HepG2 (cell line): ENCODE measurements at regions of chr12 and their contacts with region 1.

Region 1: GRCh38 chr12:56189176-56189917 is at the start of gene SMARCC2:
- DNase-seq: peak; percentile 73
- ATAC-seq: peak; percentile 86
- H3K4me3 ChIP-seq: peak within 1 kb of the TSS; percentile 76 to 94 (median 93)
- H3K27ac ChIP-seq: peak within 1 kb of the TSS; percentile 74
- H3K4me1 ChIP-seq: peaks cover 34% of the 10 kb centered on the region
- H3K27me3 ChIP-seq: no peaks in the 10 kb centered on the region; a peak in 1 of 5 replicates
- CTCF ChIP-seq: peak; percentile 81
- EP300 ChIP-seq: no peak
- POLR2A ChIP-seq: peak; percentile 29 to 46; a peak in 2 of 4 replicates
- RAD21 ChIP-seq: peak; percentile 62
- total RNA-seq, gene SMARCC2: 13.1 and 21.3 TPM in 2 replicates

Region 2: GRCh38 chr12:55885113-55885512 is 304.2 kb before region 1 on chr12:
- CTCF ChIA-PET with region 1: no interaction called
- POLR2A ChIA-PET with region 1: no interaction called
- in situ Hi-C with region 1: no loop called
- intact Hi-C with region 1: no loop called
- DNase-seq: no peak
- ATAC-seq: no peak
- H3K4me3 ChIP-seq: no peak overlapping the region
- H3K27ac ChIP-seq: no peak overlapping the region
- H3K4me1 ChIP-seq: peaks cover 11% of the 10 kb centered on the region
- H3K27me3 ChIP-seq: no peaks in the 10 kb centered on the region
- CTCF ChIP-seq: no peak
- EP300 ChIP-seq: no peak
- POLR2A ChIP-seq: no peak
- RAD21 ChIP-seq: no peak

Region 3: DNA sequence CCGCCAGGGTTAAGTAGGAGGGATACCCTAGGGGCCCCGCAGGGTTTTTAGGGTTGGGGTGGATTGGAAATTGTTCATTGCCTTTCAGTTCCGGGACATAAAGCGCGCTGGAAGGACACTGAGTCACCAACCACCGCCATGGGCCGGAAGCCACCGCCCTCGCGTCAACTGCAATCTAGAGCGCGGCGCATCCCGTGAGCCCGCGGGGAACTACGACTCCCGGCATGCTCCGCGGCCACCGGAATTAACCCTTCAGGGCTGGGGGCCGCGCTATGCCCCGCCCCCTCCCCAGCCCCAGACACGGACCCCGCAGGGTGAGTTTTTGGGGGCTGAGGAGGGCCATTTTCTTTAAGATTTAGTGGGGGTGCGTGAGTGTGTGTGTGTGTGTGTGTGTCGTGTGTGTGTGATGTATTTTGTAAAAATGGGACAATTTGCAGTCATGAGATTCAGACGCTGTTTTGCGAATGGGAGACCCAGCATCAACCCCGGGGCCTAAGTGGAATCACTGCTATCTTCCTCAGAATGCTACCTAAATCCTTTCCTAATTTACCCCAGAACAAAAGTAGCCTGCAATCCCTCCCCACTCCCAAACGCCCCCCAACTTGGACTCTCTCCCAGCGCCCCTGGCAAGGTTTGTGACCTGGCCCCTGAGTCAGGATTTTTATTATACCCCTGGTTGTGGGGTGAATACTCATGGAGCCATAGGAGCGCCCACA is 36.9 kb before region 1 on chr12 and contains the start of gene MYL6B:
- CTCF ChIA-PET with region 1: interaction called, 3 read pairs
- POLR2A ChIA-PET with region 1: interaction called, 10 read pairs
- in situ Hi-C with region 1: no loop called
- intact Hi-C with region 1: loop called (anchors 5 kb)
- DNase-seq: peak; percentile 83
- ATAC-seq: peak; percentile 89
- H3K4me3 ChIP-seq: peak within 1 kb of the TSS; percentile 79 to 86 (median 82)
- H3K27ac ChIP-seq: peak within 1 kb of the TSS; percentile 89
- H3K4me1 ChIP-seq: peaks cover 41% of the 10 kb centered on the region
- H3K27me3 ChIP-seq: no peaks in the 10 kb centered on the region; a peak in 1 of 5 replicates
- CTCF ChIP-seq: peak; percentile 25; the same call in 1 of the 2 replicates
- EP300 ChIP-seq: peak; percentile 29 to 30; a peak in 2 of 4 replicates
- POLR2A ChIP-seq: peak; percentile 66 to 81; a peak in 2 of 4 replicates
- RAD21 ChIP-seq: no peak
- total RNA-seq, gene MYL6B: 75.7 and 76.5 TPM in 2 replicates

Region 4: DNA sequence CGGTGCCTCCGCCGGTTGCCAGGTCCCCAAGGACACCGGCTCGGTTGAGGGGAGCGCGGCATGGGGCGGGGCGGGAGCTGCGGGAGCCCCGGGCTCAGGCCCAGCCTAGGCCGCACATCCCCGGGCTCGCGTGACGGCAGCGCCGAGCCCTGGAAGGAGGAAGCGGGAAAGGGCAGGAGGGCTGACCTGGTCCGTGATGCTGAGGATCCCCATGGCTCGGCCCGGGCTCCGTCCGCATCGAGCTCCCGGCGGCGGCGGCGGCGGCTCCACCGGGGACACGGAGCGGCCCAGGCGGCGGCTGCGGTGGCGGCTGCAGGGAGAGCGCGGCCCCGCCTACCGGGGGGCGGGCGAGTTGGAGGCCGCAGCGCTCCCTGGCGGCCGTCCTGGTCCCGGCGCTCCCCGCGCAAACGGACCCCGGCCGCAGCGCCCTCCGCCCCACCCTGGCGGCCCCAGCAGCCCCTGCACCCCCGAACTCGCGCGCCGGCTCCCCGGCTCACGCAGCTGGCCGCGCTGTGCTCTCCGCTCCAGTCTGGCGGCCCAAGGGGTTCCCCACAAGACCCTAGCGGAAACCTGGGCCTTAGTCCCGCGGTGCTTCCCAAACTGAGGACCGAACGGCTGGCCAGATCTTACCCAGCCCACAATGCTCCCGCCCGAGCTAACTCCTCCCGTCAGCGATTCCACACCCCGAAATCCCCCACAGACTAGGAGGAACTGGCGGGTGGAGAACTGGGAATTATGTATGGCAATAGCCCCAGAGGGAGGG is 68.9 kb after region 1 on chr12 and contains the start of gene ANKRD52:
- CTCF ChIA-PET with region 1: interaction called, 6 read pairs
- POLR2A ChIA-PET with region 1: no interaction called
- in situ Hi-C with region 1: loop called (anchors 5 kb)
- intact Hi-C with region 1: loop called (anchors 1 kb)
- DNase-seq: peak; percentile 26
- ATAC-seq: peak; percentile 92
- H3K4me3 ChIP-seq: peak within 1 kb of the TSS; percentile 74 to 96 (median 88)
- H3K27ac ChIP-seq: peak within 1 kb of the TSS; percentile 45
- H3K4me1 ChIP-seq: peaks cover 28% of the 10 kb centered on the region
- H3K27me3 ChIP-seq: no peaks in the 10 kb centered on the region
- CTCF ChIP-seq: peak; percentile 61
- EP300 ChIP-seq: no peak
- POLR2A ChIP-seq: peak in 1 of 2 experiments; percentile 47; a peak in 2 of 4 replicates
- RAD21 ChIP-seq: peak; percentile 84
- total RNA-seq, gene ANKRD52: 7.8 and 22.0 TPM in 2 replicates

Region 5: GRCh38 chr12:56377310-56377988 is 188.1 kb after region 1 on chr12:
- CTCF ChIA-PET with region 1: no interaction called
- POLR2A ChIA-PET with region 1: no interaction called
- in situ Hi-C with region 1: no loop called
- intact Hi-C with region 1: no loop called
- DNase-seq: no peak
- ATAC-seq: peak; percentile 77
- H3K4me3 ChIP-seq: peak overlapping the region in 2 of 3 experiments; percentile 5 to 18; a peak in 2 of 6 replicates
- H3K27ac ChIP-seq: no peak overlapping the region
- H3K4me1 ChIP-seq: peaks cover 45% of the 10 kb centered on the region
- H3K27me3 ChIP-seq: peaks cover 0 to 7% of the 10 kb centered on the region in 2 experiments; a peak in 1 of 5 replicates
- CTCF ChIP-seq: peak; percentile 57
- EP300 ChIP-seq: no peak
- POLR2A ChIP-seq: no peak
- RAD21 ChIP-seq: 0 out of 2 replicates have a peak, but pooled peaks have one; percentile 30

Region 6: DNA sequence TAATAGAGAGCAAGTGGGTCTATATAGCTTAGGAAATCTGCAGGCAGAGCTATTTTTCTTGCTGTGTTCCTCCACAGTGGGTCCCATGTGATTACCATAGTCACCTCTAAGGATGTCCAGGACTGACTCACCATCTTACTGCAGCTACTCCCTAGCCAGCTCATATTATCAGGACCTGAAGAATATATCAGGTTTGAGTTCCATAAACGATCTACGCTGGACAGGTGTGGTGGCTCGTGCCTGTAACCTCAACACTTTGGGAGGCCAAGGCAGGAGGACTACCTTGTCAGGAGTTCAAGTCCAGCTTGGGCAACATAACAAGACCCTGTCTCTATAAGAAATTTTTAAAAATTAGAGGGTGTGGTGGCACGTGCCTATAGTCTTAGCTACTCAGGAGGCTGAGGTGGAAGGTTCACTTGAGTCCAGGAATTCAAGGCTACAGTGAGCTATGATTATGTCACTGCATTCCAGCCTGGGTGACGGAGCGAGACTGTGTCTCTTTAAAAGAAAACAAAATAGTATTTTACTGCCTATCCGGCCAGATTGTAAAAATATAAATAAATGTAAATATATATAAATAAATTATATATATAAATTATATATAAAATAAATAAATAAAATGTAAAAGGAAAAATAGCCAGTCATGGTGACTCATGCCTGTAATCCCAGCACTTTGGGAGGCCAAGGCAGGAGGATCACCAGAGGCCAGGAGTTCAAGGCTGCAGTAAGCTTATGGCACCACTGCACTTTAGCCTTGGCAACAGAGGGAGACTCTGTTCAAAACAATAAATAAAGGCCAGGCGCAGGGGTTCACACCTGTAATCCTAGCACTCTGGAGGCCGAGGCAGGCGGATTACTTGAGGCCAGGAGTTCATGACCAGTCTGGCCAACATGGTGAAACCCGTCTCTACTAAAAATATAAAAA is 272.1 kb after region 1 on chr12:
- CTCF ChIA-PET with region 1: no interaction called
- POLR2A ChIA-PET with region 1: no interaction called
- in situ Hi-C with region 1: loop called (anchors 10 kb)
- intact Hi-C with region 1: loop called (anchors 5 kb)
- DNase-seq: peak; percentile 67
- ATAC-seq: no peak
- H3K4me3 ChIP-seq: no peak overlapping the region
- H3K27ac ChIP-seq: peak overlapping the region; percentile 54
- H3K4me1 ChIP-seq: peaks cover 62% of the 10 kb centered on the region
- H3K27me3 ChIP-seq: no peaks in the 10 kb centered on the region
- CTCF ChIP-seq: no peak
- EP300 ChIP-seq: peak; percentile 16 to 42; a peak in 1 of 4 replicates
- POLR2A ChIP-seq: no peak
- RAD21 ChIP-seq: no peak